WTC11 (cell line): ENCODE measurements at regions of chr6 and their contacts with region 1.

Region 1: DNA sequence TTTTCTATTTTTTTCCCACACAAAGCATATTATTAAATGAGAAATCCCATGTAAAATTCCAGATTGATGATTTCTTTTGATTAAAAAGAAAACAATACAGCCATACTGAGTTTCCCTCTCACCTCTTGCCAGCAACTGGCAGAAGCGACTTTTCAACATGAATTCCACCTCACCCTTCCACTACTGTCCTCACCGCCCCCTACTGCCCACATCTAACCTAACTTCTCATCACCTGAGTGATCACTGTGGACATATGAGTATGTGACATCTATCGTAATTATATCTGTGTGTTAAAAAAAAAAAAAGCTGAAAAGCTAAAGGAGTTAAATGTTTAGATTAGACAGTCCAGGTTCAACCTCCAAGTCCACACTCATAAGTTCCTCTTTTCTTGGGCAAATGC is 528.6 kb downstream of the PRKN start:
- DNase-seq: peak; percentile 19
- ATAC-seq: peak; percentile 50
- H3K4me3 Mint-ChIP-seq: no peak overlapping the region
- H3K27ac Mint-ChIP-seq: no peak overlapping the region
- H3K4me1 Mint-ChIP-seq: peaks cover 37% of the 10 kb centered on the region
- H3K27me3 Mint-ChIP-seq: no peaks in the 10 kb centered on the region
- CTCF ChIP-seq: no peak

Region 2: DNA sequence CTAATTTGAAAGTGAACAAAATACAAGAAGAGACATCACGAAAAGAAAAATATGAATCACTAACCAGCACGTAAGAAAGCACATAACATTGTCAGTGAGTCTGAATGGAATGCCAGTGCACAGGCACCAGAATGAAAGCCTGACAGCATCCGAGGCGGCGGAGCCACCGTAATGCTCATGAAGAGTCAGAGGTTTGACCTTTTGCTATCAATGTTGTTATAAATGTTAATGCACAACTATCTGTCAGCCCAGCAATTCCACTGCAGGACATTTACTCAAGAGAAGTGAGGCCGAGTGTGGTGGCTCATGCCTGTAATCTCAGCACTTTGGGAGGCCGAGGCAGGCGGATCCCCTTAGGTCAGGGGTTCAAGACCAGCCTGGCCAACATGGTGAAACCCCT is 33.4 kb before region 1 on chr6:
- CTCF ChIA-PET with region 1: no interaction called
- POLR2A ChIA-PET with region 1: no interaction called
- DNase-seq: no peak
- ATAC-seq: no peak
- H3K4me3 Mint-ChIP-seq: no peak overlapping the region
- H3K27ac Mint-ChIP-seq: no peak overlapping the region
- H3K4me1 Mint-ChIP-seq: no peaks in the 10 kb centered on the region
- H3K27me3 Mint-ChIP-seq: no peaks in the 10 kb centered on the region
- CTCF ChIP-seq: no peak

Region 3: GRCh38 chr6:162177746-162178145 is 21.2 kb before region 1 on chr6:
- CTCF ChIA-PET with region 1: no interaction called
- POLR2A ChIA-PET with region 1: no interaction called
- DNase-seq: peak; percentile 17
- ATAC-seq: peak; percentile 93
- H3K4me3 Mint-ChIP-seq: no peak overlapping the region
- H3K27ac Mint-ChIP-seq: no peak overlapping the region
- H3K4me1 Mint-ChIP-seq: no peaks in the 10 kb centered on the region
- H3K27me3 Mint-ChIP-seq: no peaks in the 10 kb centered on the region
- CTCF ChIP-seq: no peak

Region 4: DNA sequence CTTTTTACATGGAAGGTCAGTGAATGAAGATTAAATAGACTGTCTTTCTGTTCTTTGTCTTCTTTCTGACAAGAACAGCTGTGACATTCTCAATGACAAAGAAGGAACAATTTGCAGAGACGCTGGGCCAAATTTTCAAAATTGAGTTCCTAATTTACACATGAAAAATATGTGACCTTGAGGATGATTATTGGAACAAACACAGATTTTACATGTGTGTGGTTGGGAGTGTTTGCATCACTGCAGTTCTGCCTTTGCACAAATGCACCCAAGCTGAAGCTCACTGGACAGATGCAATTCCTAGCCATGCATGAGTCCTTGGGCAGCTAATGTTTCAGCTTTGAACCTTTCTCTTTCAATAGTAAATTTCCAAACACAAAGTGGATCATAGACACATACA is 1566.4 kb after region 1 on chr6:
- CTCF ChIA-PET with region 1: no interaction called
- POLR2A ChIA-PET with region 1: interaction called, 10 read pairs
- DNase-seq: no peak
- ATAC-seq: no peak
- H3K4me3 Mint-ChIP-seq: no peak overlapping the region
- H3K27ac Mint-ChIP-seq: no peak overlapping the region
- H3K4me1 Mint-ChIP-seq: peaks cover 13% of the 10 kb centered on the region
- H3K27me3 Mint-ChIP-seq: no peaks in the 10 kb centered on the region
- CTCF ChIP-seq: no peak